HEK293 (cell line): ENCODE measurements at regions of chr16 and their contacts with region 1.

Region 1: GRCh38 chr16:9008601-9009260 is 45.0 kb upstream of the USP7 start:
- H3K4me3 ChIP-seq: no peak overlapping the region
- H3K27ac ChIP-seq: no peak overlapping the region
- H3K4me1 ChIP-seq: no peaks in the 10 kb centered on the region
- CTCF ChIP-seq: peak; percentile 86

Region 2: GRCh38 chr16:8660841-8661301 is 347.9 kb before region 1 on chr16:
- CTCF ChIA-PET with region 1: interaction called, 12 read pairs
- POLR2A ChIA-PET with region 1: interaction called, 4 read pairs
- H3K4me3 ChIP-seq: no peak overlapping the region
- H3K27ac ChIP-seq: no peak overlapping the region
- H3K4me1 ChIP-seq: no peaks in the 10 kb centered on the region
- CTCF ChIP-seq: peak; percentile 90

Region 3: DNA sequence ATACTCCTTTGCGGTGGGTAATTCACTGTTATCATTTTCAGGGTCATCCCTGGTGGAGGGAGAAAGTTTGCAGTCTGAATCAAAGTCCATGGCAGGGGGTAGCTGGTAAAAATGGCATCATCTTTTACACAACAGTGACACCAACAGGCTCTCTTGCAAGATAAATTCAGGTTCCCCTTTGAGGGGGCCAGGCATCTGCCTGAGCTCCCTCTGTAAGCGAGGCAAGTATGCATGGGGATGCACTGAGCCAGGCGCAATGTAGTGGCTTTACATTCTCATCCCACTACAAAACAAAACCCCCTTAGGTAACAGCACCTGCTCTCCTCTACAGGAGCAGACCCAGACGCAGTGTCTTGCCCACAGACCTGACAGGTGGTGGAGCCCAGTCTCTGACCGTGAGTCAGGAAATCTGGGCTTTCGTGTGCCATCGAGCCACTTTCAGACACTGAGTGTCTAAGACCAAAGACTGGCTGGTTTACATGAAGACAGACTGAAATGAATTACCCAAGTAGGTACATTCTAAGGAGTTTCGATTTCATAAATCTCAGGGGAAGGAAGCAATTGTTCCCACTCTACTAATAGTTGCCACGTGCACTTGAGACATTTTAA is 108.9 kb before region 1 on chr16:
- CTCF ChIA-PET with region 1: interaction called, 15 read pairs
- POLR2A ChIA-PET with region 1: no interaction called
- H3K4me3 ChIP-seq: no peak overlapping the region
- H3K27ac ChIP-seq: no peak overlapping the region
- H3K4me1 ChIP-seq: no peaks in the 10 kb centered on the region
- CTCF ChIP-seq: no peak

Region 4: GRCh38 chr16:8936421-8936820 is 72.3 kb before region 1 on chr16:
- CTCF ChIA-PET with region 1: interaction called, 11 read pairs
- POLR2A ChIA-PET with region 1: interaction called, 5 read pairs
- H3K4me3 ChIP-seq: no peak overlapping the region
- H3K27ac ChIP-seq: no peak overlapping the region
- H3K4me1 ChIP-seq: peaks cover 2% of the 10 kb centered on the region; the same call in 1 of the 2 replicates
- CTCF ChIP-seq: no peak

Region 5: GRCh38 chr16:9027070-9027795 is 18.5 kb after region 1 on chr16:
- CTCF ChIA-PET with region 1: interaction called, 17 read pairs
- POLR2A ChIA-PET with region 1: no interaction called
- H3K4me3 ChIP-seq: no peak overlapping the region
- H3K27ac ChIP-seq: no peak overlapping the region
- H3K4me1 ChIP-seq: no peaks in the 10 kb centered on the region
- CTCF ChIP-seq: no peak

Region 6: DNA sequence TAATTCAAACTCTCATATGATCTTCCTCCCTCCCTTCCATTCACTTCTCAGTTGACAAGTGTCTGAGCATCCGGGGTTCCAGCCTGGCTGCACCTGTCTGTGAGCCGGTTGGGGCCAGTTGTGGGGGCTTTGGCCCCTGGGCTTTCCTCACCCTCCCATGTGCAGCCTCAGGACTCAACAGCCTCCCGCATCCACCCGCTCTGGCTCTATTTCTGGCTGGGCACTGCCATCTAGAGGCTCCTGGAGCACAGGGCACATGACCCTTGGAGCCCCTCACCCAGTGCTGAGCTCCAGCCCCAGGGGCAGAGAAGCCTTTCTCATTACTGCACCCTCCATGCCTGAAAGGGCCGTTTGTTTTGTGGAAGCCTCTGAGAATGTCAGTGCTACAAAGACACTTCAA is 126.0 kb after region 1 on chr16:
- CTCF ChIA-PET with region 1: interaction called, 10 read pairs
- POLR2A ChIA-PET with region 1: no interaction called
- H3K4me3 ChIP-seq: no peak overlapping the region
- H3K27ac ChIP-seq: no peak overlapping the region
- H3K4me1 ChIP-seq: no peaks in the 10 kb centered on the region
- CTCF ChIP-seq: peak; percentile 49; the same call in 1 of the 2 replicates